ENCODE measurements at regions of chr2 and their contacts with region 1.

Region 1: GRCh38 chr2:231854671-231855070 is 68.4 kb downstream of the COPS7B start:
- DNase-seq: no peak

Region 2: DNA sequence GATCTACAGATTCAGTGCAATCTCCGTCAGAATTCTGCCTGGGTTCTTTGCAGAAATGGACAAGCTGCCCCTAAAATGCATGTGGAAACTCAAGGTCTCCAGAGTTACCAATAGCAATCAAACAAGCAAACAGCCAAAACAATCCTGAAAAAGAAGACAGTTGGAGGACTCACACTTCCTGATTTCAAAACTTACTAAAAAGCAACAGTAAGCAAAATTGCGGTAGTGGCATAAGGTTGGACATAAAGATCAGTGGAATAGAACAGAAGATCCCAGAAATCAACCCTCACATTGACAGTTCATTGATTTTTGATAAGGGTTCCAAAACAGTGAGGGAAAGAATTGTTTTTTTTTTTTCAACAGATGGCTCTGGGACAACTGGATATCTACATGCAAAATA is 11.8 kb after region 1 on chr2:
- CTCF ChIA-PET with region 1: no interaction called
- POLR2A ChIA-PET with region 1: no interaction called
- DNase-seq: no peak

Region 3: GRCh38 chr2:232075080-232075479 is 220.4 kb after region 1 on chr2:
- CTCF ChIA-PET with region 1: no interaction called
- POLR2A ChIA-PET with region 1: no interaction called
- DNase-seq: no peak

Region 4: DNA sequence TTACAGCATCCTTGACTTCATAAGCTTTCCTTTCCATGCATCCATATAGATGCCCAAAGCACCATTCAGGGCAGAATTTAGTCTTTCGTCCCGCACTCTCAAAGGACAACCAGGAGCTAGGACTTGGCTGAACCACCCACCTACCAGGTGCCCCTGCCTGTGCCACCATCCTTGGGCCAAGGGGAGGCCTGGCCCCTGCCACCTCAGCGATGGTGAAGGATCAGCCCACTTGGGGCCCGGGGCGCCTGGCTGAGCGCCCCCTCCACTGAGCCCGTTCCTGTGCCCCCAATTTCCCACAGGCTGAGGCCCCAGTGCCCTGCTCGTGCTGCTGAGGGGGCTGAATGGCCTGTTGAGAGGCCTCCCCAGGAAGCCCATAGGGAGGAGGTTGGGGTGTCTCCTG is 490.6 kb after region 1 on chr2:
- CTCF ChIA-PET with region 1: interaction called, 10 read pairs
- POLR2A ChIA-PET with region 1: no interaction called
- DNase-seq: no peak

Measured in HEK293T (cell line).